CD8-positive, alpha-beta T cell (primary cell): ENCODE measurements at regions of chr12 and their contacts with region 1.

Region 1: GRCh38 chr12:110280779-110281548 is at the start of gene ATP2A2:
- DNase-seq: peak; percentile 75 to 97 (median 90)
- ATAC-seq: peak; percentile 89
- H3K4me3 ChIP-seq: peak within 1 kb of the TSS; percentile 60 to 82
- H3K4me3 Mint-ChIP-seq: peak within 1 kb of the TSS; percentile 91
- H3K27ac ChIP-seq: peak within 1 kb of the TSS; percentile 70 to 77
- H3K27ac Mint-ChIP-seq: peak within 1 kb of the TSS; percentile 94
- H3K4me1 ChIP-seq: peaks cover 35% of the 10 kb centered on the region
- H3K4me1 Mint-ChIP-seq: peaks cover 46% of the 10 kb centered on the region
- H3K27me3 ChIP-seq: no peaks in the 10 kb centered on the region
- H3K27me3 Mint-ChIP-seq: no peaks in the 10 kb centered on the region
- CTCF ChIP-seq: no peak
- total RNA-seq, gene ATP2A2: 100 to 105 TPM

Region 2: GRCh38 chr12:109995686-109996482 is 285.1 kb before region 1 on chr12 and contains the start of gene GIT2:
- CTCF ChIA-PET with region 1: no interaction called
- POLR2A ChIA-PET with region 1: no interaction called
- intact Hi-C with region 1: loop called (anchors 1 to 5 kb)
- DNase-seq: peak; percentile 87 to 98 (median 94)
- ATAC-seq: peak; percentile 76
- H3K4me3 ChIP-seq: peak within 1 kb of the TSS; percentile 79 to 89
- H3K4me3 Mint-ChIP-seq: peak within 1 kb of the TSS; percentile 97
- H3K27ac ChIP-seq: peak within 1 kb of the TSS; percentile 70 to 85
- H3K27ac Mint-ChIP-seq: peak within 1 kb of the TSS; percentile 89
- H3K4me1 ChIP-seq: peaks cover 34% of the 10 kb centered on the region
- H3K4me1 Mint-ChIP-seq: peaks cover 71% of the 10 kb centered on the region
- H3K27me3 ChIP-seq: no peaks in the 10 kb centered on the region
- H3K27me3 Mint-ChIP-seq: no peaks in the 10 kb centered on the region
- CTCF ChIP-seq: no peak
- total RNA-seq, gene GIT2: 47.6 to 57.9 TPM

Region 3: GRCh38 chr12:110403146-110403975 is 122.4 kb after region 1 on chr12 and contains the start of gene ANAPC7:
- CTCF ChIA-PET with region 1: no interaction called
- POLR2A ChIA-PET with region 1: interaction called, 4 read pairs
- intact Hi-C with region 1: loop called (anchors 1 to 2 kb)
- DNase-seq: peak; percentile 69 to 93 (median 87)
- ATAC-seq: peak; percentile 96
- H3K4me3 ChIP-seq: peak within 1 kb of the TSS; percentile 87 to 89
- H3K4me3 Mint-ChIP-seq: peak within 1 kb of the TSS; percentile 100
- H3K27ac ChIP-seq: peak within 1 kb of the TSS; percentile 78 to 96
- H3K27ac Mint-ChIP-seq: peak within 1 kb of the TSS; percentile 98
- H3K4me1 ChIP-seq: peaks cover 20% of the 10 kb centered on the region
- H3K4me1 Mint-ChIP-seq: peaks cover 33% of the 10 kb centered on the region
- H3K27me3 ChIP-seq: no peaks in the 10 kb centered on the region
- H3K27me3 Mint-ChIP-seq: no peaks in the 10 kb centered on the region
- CTCF ChIP-seq: no peak
- total RNA-seq, gene ANAPC7: 22.1 to 23.2 TPM

Region 4: DNA sequence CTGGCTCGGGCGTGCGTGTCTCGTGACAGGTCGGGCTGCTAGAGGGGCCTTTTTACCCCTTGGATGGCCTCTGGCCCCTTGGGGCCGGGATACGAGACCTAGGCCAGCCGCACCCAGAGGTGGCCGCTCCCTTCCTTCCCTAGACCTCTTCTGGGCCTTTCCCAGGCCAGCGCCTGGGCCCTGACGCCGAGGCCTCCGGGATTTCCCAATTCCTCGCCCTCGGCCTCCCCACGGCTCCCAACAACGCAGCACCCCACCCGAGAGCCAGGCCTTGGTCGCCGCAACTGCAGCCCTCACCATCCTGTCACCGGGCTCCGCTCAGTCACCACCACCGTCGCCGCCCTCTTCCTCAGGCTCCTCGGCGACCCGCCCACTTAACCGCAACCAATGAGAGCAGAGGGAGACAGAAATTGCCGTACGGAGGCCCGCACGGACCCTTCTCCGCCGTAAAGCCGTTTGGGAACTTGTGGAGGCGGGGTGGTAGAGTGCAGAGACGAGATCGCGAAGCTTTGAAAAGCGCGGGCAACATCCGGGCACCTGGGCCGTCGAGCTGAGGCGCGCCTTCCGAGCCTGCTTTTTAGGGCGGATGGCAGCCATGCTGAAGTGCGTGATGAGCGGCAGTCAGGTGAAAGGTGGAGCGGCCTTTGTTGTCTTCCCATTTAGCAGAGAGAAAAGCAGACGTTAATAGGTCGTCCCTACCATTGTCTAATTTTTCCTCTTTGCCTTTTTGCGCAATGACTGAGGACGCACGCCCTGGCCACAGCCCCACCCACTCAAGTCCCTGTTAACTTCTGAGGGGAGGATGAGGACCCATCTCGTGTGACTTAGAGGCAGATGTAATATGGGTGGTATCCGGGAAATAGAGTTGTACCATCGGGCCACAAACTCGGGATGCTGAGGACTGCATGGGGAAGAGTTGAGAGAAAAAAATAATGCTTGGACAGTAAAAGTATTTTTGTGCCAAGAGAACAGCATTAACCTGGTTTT is 221.1 kb after region 1 on chr12 and contains the starts of genes RAD9B and VPS29:
- CTCF ChIA-PET with region 1: no interaction called
- POLR2A ChIA-PET with region 1: interaction called, 3 read pairs
- intact Hi-C with region 1: loop called (anchors 1 to 2 kb)
- DNase-seq: peak; percentile 98 to 100 (median 99)
- ATAC-seq: peak; percentile 92
- H3K4me3 ChIP-seq: peak within 1 kb of the TSS; percentile 73 to 79
- H3K4me3 Mint-ChIP-seq: peak within 1 kb of the TSS; percentile 97
- H3K27ac ChIP-seq: peak within 1 kb of the TSS; percentile 74 to 89
- H3K27ac Mint-ChIP-seq: peak within 1 kb of the TSS; percentile 97
- H3K4me1 ChIP-seq: peaks cover 17% of the 10 kb centered on the region
- H3K4me1 Mint-ChIP-seq: peaks cover 38% of the 10 kb centered on the region
- H3K27me3 ChIP-seq: no peaks in the 10 kb centered on the region
- H3K27me3 Mint-ChIP-seq: no peaks in the 10 kb centered on the region
- CTCF ChIP-seq: no peak
- total RNA-seq, gene RAD9B: 0.57 to 1.5 TPM
- total RNA-seq, gene VPS29: 49.6 to 53.5 TPM